ENCODE measurements at regions of chr11 and their contacts with region 1.

Region 1: DNA sequence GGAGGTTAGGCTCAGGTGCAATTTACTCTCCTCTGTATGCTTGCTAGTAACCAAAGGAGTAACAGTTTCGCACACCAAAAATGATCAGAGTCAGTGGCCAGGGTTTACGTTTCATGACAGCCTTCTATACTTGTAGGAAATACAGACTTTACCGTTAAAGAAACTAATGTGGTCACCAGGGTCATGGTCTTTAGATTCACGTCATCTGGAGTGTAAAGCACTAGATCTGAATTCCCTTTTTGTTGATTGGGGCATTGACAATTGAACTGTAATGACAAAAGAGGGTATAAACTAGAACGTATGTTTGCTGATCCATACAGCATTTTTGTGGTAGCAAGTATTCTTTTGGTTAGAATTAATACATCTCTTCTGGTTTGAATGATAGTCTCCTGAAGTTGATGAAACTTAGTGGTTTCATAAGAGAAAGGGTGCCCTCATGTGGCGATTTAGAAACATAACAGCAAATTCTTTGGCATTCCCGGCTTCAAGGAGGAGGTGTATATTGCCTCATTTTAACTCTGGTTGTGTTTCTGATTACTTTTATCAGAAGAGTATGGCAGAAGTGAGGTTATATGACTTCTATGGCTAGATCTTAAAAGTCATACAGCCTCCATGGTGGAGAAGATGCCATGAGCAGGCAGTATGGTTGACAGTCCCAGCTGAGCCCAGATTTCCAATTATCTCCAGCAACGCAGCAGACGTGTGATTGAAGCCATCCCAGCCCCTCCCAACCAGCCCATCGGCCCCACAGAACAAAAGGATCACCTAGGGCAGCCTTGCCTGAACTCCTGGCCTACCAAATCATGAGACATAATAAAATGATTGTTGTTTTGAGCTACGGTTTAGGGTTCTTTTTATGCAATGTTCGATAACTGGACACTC is 35.1 kb downstream of the MMP7 start:
- DNase-seq: peak; percentile 22
- H3K4me3 Mint-ChIP-seq: no peak overlapping the region
- H3K27ac Mint-ChIP-seq: no peak overlapping the region
- H3K4me1 Mint-ChIP-seq: peaks cover 18% of the 10 kb centered on the region
- H3K27me3 Mint-ChIP-seq: peaks cover 7% of the 10 kb centered on the region

Region 2: GRCh38 chr11:102139081-102139498 is 356.3 kb before region 1 on chr11:
- CTCF ChIA-PET with region 1: no interaction called
- POLR2A ChIA-PET with region 1: no interaction called
- intact Hi-C with region 1: no loop called
- DNase-seq: no peak
- H3K4me3 Mint-ChIP-seq: no peak overlapping the region
- H3K27ac Mint-ChIP-seq: no peak overlapping the region
- H3K4me1 Mint-ChIP-seq: no peaks in the 10 kb centered on the region
- H3K27me3 Mint-ChIP-seq: peaks cover 5% of the 10 kb centered on the region

Region 3: DNA sequence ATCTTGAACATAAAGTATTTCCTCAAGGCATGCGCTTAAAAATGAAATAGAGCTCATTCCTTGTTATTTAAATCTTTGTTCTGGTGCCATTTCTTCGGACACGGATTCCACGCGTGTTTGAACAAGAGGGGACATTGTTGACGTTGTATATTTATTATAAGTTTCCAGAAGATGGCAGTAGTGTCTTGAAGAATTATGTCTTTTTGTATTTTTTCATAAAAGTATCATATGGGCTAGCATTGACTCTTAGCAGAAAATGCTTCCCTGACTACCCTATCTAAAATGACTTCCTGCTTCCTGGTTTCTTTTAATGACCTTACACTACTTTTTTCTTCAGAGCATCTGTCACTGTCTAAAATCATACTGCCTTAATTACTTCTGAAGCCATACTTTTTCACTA is 128.0 kb before region 1 on chr11:
- CTCF ChIA-PET with region 1: interaction called, 15 read pairs
- POLR2A ChIA-PET with region 1: no interaction called
- intact Hi-C with region 1: loop called (anchors 1 kb)
- DNase-seq: no peak
- H3K4me3 Mint-ChIP-seq: no peak overlapping the region
- H3K27ac Mint-ChIP-seq: peak overlapping the region; percentile 15
- H3K4me1 Mint-ChIP-seq: peaks cover 22% of the 10 kb centered on the region
- H3K27me3 Mint-ChIP-seq: no peaks in the 10 kb centered on the region

Region 4: DNA sequence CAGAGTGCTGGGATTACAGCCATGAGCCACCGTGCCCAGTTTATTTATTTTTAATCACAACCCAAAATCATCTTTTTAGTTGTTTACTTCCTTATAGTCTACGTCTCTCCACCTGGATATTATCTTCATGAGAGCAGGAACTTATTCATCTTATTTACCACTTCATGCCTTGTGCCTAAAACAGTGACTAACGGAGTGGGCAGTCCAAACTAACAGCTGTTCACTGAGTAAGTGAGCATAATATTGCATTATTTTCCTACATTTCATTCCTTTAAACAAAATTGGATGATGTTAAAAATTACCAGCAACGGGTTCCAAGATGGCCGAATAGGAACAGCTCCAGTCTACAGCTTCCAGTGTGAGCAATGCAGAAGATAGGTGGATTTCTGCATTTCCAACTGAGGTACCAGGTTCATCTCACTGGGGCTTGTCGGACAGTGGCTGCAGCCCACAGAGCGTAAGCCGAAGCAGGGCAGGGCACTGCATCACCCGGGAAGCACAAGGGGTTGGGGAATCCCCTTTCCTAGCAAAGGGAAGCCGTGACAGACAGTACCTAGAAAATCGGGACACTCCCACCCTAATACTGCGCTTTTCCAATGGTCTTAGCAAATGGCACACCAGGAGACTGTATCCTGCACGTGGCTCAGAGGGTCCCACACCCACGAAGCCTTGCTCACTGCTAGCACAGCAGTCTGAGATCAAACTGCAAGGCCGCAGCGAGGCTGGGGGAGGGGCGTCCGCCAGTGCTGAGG is 56.9 kb before region 1 on chr11:
- CTCF ChIA-PET with region 1: no interaction called
- POLR2A ChIA-PET with region 1: no interaction called
- intact Hi-C with region 1: no loop called
- DNase-seq: peak; percentile 55
- H3K4me3 Mint-ChIP-seq: peak overlapping the region; percentile 28
- H3K27ac Mint-ChIP-seq: peak overlapping the region; percentile 40
- H3K4me1 Mint-ChIP-seq: peaks cover 91% of the 10 kb centered on the region
- H3K27me3 Mint-ChIP-seq: no peaks in the 10 kb centered on the region

Region 5: GRCh38 chr11:102666331-102666957 is 171.0 kb after region 1 on chr11:
- CTCF ChIA-PET with region 1: interaction called, 16 read pairs
- POLR2A ChIA-PET with region 1: no interaction called
- intact Hi-C with region 1: loop called (anchors 2 kb)
- DNase-seq: peak; percentile 15
- H3K4me3 Mint-ChIP-seq: no peak overlapping the region
- H3K27ac Mint-ChIP-seq: no peak overlapping the region
- H3K4me1 Mint-ChIP-seq: no peaks in the 10 kb centered on the region
- H3K27me3 Mint-ChIP-seq: no peaks in the 10 kb centered on the region